Mammary epithelial cell (primary cell): ENCODE measurements at regions of chr7 and their contacts with region 1.

Region 1: DNA sequence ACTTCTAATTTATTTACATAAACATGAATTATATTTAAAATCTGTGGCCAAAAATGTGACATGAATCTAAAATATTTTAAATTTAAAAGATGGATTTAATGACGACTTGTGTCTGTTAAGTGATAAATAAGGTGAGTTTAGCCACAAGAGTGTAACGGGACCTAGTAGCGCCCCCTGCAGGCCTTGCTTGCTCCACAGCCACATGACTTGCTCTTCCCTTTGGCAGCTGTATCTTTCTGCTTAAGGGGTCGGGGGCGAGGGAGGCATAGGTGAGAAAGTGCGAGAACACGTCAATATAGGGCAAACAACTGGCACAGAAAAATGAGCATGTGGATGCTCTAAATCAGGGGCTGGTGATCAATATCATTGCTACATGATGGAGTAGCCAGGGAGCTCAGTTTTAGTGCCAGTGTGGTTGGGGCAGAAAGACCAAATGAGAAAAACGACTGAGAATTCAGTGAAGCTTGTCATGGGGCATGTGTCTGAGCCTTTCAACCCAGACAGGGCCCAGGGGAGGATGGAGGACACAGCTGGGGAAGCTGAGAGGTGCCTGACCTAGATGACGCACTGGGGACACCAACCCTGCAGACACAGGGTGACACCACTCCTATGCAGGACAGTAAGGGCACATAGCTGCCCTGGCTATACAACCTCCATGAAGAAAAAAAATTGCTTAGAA is 49.8 kb downstream of the PAXIP1 start:
- DNase-seq: peak; percentile 16
- H3K4me3 ChIP-seq: no peak overlapping the region
- H3K27ac ChIP-seq: no peak overlapping the region
- H3K4me1 ChIP-seq: no peaks in the 10 kb centered on the region
- H3K27me3 ChIP-seq: no peaks in the 10 kb centered on the region
- CTCF ChIP-seq: peak; percentile 66 to 75

Region 2: DNA sequence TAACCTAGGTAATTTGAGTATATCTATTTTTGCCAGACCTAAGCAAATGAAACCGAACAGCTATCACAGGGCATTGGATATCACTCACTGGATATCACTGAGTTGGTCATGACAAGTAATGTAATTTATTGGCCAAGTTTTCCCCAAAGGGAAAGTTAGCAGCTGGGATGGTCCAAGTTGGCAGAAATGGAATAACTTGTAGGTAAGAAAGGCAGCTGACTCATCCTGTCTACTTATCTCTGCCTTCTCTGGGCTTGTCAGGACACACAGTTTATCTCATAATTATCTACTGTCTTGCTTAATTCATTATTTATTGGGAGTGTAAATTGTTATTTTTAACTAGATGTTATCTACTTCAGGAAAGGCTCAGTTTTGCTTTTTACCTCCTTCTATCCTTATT is 1403.0 kb before region 1 on chr7:
- CTCF ChIA-PET with region 1: no interaction called
- dilution Hi-C with region 1: no loop called
- in situ Hi-C with region 1: no loop called
- intact Hi-C with region 1: no loop called
- DNase-seq: peak; percentile 36
- H3K4me3 ChIP-seq: no peak overlapping the region
- H3K27ac ChIP-seq: no peak overlapping the region
- H3K4me1 ChIP-seq: peaks cover 13% of the 10 kb centered on the region
- H3K27me3 ChIP-seq: no peaks in the 10 kb centered on the region
- CTCF ChIP-seq: no peak

Region 3: GRCh38 chr7:154913638-154914312 is 39.4 kb before region 1 on chr7:
- CTCF ChIA-PET with region 1: no interaction called
- dilution Hi-C with region 1: no loop called
- in situ Hi-C with region 1: no loop called
- intact Hi-C with region 1: loop called (anchors 1 kb)
- DNase-seq: peak; percentile 60
- H3K4me3 ChIP-seq: peak overlapping the region in 1 of 3 experiments; percentile 30
- H3K27ac ChIP-seq: no peak overlapping the region
- H3K4me1 ChIP-seq: peaks cover 4% of the 10 kb centered on the region
- H3K27me3 ChIP-seq: no peaks in the 10 kb centered on the region
- CTCF ChIP-seq: peak; percentile 74 to 96

Region 4: DNA sequence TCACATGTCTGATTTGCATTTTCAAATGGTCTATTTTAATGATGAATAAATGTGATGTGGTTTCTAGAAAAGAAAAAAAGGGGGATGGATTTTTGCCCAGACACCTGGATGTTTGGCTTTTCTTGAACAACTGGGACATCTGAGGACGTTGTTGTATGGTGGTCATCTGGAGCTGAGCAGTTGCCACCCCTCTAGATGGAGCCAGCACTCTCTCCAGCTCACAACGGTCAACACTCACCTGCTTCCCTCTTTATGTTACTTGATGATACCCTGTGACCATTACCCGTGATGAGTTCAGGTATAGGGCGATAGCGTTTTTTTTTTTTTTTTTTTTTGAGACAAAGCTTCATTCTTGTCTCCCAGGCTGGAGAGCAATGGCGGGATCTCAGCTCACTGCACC is 79.8 kb after region 1 on chr7:
- CTCF ChIA-PET with region 1: no interaction called
- dilution Hi-C with region 1: no loop called
- in situ Hi-C with region 1: no loop called
- intact Hi-C with region 1: no loop called
- DNase-seq: no peak
- H3K4me3 ChIP-seq: no peak overlapping the region
- H3K27ac ChIP-seq: no peak overlapping the region
- H3K4me1 ChIP-seq: no peaks in the 10 kb centered on the region
- H3K27me3 ChIP-seq: no peaks in the 10 kb centered on the region
- CTCF ChIP-seq: peak in 1 of 2 donors; percentile 8